Activated CD4-positive, alpha-beta T cell treated with anti-CD3 and anti-CD28 coated beads for 36 hours (primary cell): ENCODE measurements at regions of chr21 and their contacts with region 1.

Region 1: DNA sequence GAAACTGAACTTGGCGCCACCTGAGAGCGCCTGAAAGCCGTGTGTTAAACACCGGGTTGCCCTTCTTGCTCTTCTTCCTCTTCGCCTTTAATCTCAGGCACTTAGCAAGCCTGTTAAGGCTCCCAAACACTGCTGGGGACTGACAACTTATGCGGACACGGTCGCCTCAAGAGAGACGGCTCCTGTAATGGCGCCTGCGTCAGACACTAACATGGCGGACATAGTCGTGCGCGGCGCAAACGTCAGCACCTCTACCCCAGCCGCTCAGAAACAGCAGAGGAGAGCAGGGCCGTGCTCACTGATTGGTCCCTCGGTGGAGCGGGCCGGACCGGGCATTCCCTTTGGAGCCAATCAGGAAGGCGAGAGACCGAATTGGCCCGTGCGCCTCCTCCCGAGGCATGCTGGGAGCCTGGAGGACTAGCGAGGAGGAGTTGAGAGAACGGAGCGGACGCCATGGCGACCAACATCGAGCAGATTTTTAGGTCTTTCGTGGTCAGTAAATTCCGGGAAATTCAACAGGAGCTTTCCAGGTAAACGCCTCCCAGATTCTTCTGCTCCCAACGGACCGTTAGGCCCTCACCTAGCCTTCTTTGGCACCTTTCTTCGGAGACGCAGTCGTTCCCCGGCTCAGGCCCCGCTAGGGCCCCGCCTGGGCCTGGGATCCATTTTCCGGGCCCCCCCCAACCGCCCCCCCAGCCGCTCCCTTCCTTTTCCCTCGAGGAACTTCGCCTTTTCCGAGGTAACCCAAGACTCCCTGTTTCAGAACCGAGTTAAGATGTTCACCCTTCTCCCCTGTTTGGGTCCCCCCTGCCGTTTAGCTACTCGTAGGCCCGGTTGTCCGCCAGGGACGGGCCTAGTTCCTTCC is at the start of gene SON:
- DNase-seq: peak; percentile 99
- ATAC-seq: peak; percentile 94
- H3K4me3 Mint-ChIP-seq: peak within 1 kb of the TSS; percentile 85
- H3K27ac Mint-ChIP-seq: peak within 1 kb of the TSS; percentile 98
- H3K4me1 Mint-ChIP-seq: peaks cover 29% of the 10 kb centered on the region
- H3K27me3 Mint-ChIP-seq: no peaks in the 10 kb centered on the region
- total RNA-seq, gene SON: 299 to 380 TPM

Region 2: GRCh38 chr21:32612075-32612998 is 930.5 kb before region 1 on chr21 and contains the start of gene CFAP298:
- CTCF ChIA-PET with region 1: no interaction called
- POLR2A ChIA-PET with region 1: no interaction called
- intact Hi-C with region 1: loop called in 1 of 2 experiments (anchors 5 kb)
- DNase-seq: peak; percentile 92
- ATAC-seq: peak; percentile 90
- H3K4me3 Mint-ChIP-seq: peak within 1 kb of the TSS; percentile 96
- H3K27ac Mint-ChIP-seq: peak within 1 kb of the TSS; percentile 90
- H3K4me1 Mint-ChIP-seq: peaks cover 9% of the 10 kb centered on the region
- H3K27me3 Mint-ChIP-seq: no peaks in the 10 kb centered on the region
- total RNA-seq, gene CFAP298: 39.5 to 47.9 TPM

Region 3: GRCh38 chr21:32770871-32771523 is 771.9 kb before region 1 on chr21:
- CTCF ChIA-PET with region 1: no interaction called
- POLR2A ChIA-PET with region 1: no interaction called
- intact Hi-C with region 1: loop called (anchors 1 to 5 kb)
- DNase-seq: peak; percentile 76
- ATAC-seq: peak; percentile 17
- H3K4me3 Mint-ChIP-seq: peak overlapping the region; percentile 99
- H3K27ac Mint-ChIP-seq: peak overlapping the region; percentile 96
- H3K4me1 Mint-ChIP-seq: peaks cover 54% of the 10 kb centered on the region
- H3K27me3 Mint-ChIP-seq: no peaks in the 10 kb centered on the region

Region 4: DNA sequence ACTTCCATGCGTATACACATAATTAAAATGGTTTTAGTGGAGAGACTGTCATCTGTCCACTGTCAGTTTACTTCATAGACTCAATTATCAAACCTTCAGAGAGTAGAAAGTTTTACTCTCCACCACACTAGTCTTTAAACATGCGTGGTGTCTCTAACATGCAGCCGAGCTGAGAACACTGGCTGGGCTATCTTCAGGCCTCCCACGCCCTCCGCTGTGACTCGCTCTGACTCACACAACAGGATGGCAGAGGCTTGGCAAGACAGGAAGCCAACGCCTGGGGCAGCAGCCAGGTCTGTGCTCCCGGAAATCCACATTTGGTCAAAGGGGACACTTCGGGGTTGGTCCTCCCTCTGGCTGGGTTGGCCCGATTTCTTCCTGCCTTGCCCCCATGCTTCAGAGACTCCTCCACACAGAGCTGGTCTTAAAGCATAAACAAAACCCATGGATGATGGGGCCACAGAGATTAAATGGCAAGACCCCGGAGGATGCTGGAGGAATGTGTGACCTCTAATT is 162.3 kb before region 1 on chr21:
- CTCF ChIA-PET with region 1: no interaction called
- POLR2A ChIA-PET with region 1: no interaction called
- intact Hi-C with region 1: loop called in 1 of 2 experiments (anchors 5 kb)
- DNase-seq: peak; percentile 96
- ATAC-seq: peak; percentile 85
- H3K4me3 Mint-ChIP-seq: peak overlapping the region; percentile 19
- H3K27ac Mint-ChIP-seq: peak overlapping the region; percentile 88
- H3K4me1 Mint-ChIP-seq: peaks cover 62% of the 10 kb centered on the region
- H3K27me3 Mint-ChIP-seq: peaks cover 4% of the 10 kb centered on the region

Region 5: GRCh38 chr21:33491373-33492102 is 51.3 kb before region 1 on chr21 and contains the start of gene DNAJC28:
- CTCF ChIA-PET with region 1: interaction called, 3 read pairs
- POLR2A ChIA-PET with region 1: interaction called, 3 read pairs
- intact Hi-C with region 1: loop called (anchors 1 kb)
- DNase-seq: peak; percentile 95
- ATAC-seq: peak; percentile 99
- H3K4me3 Mint-ChIP-seq: peak within 1 kb of the TSS; percentile 87
- H3K27ac Mint-ChIP-seq: peak within 1 kb of the TSS; percentile 91
- H3K4me1 Mint-ChIP-seq: peaks cover 9% of the 10 kb centered on the region
- H3K27me3 Mint-ChIP-seq: no peaks in the 10 kb centered on the region
- total RNA-seq, gene DNAJC28: 0.37 to 0.43 TPM

Region 6: DNA sequence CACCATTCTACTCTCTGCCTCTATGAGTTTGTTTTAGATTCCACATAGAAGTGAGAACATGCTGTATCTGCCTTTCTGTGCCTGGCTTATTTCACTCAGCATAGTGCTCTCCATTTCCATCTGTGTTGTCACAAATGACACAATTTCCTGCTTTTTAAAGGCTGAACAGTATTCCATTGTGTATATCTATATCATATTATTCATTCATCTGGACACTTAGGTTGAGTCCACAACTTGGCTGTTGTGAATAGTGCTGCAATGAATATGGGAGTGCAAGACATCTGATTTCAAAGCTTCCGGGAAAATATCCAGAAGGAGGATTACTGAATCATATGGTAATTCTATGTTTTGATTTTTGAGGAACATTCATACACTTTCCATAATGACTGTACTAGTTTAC is 65.7 kb after region 1 on chr21:
- CTCF ChIA-PET with region 1: interaction called, 9 read pairs
- POLR2A ChIA-PET with region 1: interaction called, 3 read pairs
- intact Hi-C with region 1: loop called in 1 of 2 experiments (anchors 1 kb)
- DNase-seq: no peak
- ATAC-seq: no peak
- H3K4me3 Mint-ChIP-seq: no peak overlapping the region
- H3K27ac Mint-ChIP-seq: no peak overlapping the region
- H3K4me1 Mint-ChIP-seq: peaks cover 4% of the 10 kb centered on the region
- H3K27me3 Mint-ChIP-seq: no peaks in the 10 kb centered on the region

Region 7: GRCh38 chr21:33947451-33948095 is 404.7 kb after region 1 on chr21:
- CTCF ChIA-PET with region 1: no interaction called
- POLR2A ChIA-PET with region 1: no interaction called
- intact Hi-C with region 1: loop called in 1 of 2 experiments (anchors 1 kb)
- DNase-seq: peak; percentile 92
- ATAC-seq: peak; percentile 63
- H3K4me3 Mint-ChIP-seq: peak overlapping the region; percentile 70
- H3K27ac Mint-ChIP-seq: peak overlapping the region; percentile 100
- H3K4me1 Mint-ChIP-seq: peaks cover 79% of the 10 kb centered on the region
- H3K27me3 Mint-ChIP-seq: no peaks in the 10 kb centered on the region